B cell (primary cell): ENCODE measurements at regions of chr1 and their contacts with region 1.

Region 1: DNA sequence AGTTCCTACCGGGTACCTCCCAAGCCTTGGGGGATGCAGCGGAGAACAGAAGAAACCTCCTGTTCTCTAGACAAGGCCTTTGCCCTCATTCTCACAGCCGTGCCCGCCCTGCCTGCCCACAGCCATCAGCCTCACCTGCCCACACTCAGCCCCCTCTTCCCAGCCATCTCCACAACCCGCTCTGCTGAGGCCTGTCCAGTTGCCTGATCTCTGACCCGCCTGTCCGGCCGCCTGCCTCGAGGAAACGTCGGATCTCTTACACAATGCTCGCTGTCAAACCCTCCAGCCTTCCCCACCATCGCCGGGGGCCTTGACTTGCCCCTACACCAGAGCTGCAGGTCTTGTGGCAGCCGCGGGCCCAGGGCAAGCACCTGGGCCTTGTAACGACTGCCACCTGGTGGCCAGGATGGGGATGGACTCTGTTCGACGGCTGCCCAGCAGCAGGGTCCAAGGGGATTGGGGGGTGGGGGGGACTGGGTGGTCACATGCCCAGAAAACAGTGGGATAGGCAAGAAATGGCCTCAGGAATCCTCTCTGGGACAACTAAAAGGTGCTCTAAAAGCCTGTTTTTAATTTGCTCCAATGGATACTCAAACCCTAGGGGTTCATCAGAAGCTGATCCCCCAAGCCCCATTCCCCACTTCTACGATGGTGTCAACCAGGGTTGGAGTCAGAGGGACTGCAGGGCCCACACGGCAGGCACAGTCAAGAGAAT is 31.0 kb downstream of the SLC45A1 start:
- DNase-seq: peak; percentile 78
- ATAC-seq: peak; percentile 89
- H3K4me3 ChIP-seq: no peak overlapping the region
- H3K4me3 Mint-ChIP-seq: no peak overlapping the region
- H3K27ac ChIP-seq: no peak overlapping the region
- H3K27ac Mint-ChIP-seq: peak overlapping the region; percentile 61
- H3K4me1 ChIP-seq: peaks cover 3% of the 10 kb centered on the region in 2 donors
- H3K4me1 Mint-ChIP-seq: peaks cover 4% of the 10 kb centered on the region
- H3K27me3 ChIP-seq: peaks cover 0 to 3% (median 0%) of the 10 kb centered on the region in 4 experiments
- H3K27me3 Mint-ChIP-seq: peaks cover 8% of the 10 kb centered on the region
- CTCF ChIP-seq: peak; percentile 85

Region 2: DNA sequence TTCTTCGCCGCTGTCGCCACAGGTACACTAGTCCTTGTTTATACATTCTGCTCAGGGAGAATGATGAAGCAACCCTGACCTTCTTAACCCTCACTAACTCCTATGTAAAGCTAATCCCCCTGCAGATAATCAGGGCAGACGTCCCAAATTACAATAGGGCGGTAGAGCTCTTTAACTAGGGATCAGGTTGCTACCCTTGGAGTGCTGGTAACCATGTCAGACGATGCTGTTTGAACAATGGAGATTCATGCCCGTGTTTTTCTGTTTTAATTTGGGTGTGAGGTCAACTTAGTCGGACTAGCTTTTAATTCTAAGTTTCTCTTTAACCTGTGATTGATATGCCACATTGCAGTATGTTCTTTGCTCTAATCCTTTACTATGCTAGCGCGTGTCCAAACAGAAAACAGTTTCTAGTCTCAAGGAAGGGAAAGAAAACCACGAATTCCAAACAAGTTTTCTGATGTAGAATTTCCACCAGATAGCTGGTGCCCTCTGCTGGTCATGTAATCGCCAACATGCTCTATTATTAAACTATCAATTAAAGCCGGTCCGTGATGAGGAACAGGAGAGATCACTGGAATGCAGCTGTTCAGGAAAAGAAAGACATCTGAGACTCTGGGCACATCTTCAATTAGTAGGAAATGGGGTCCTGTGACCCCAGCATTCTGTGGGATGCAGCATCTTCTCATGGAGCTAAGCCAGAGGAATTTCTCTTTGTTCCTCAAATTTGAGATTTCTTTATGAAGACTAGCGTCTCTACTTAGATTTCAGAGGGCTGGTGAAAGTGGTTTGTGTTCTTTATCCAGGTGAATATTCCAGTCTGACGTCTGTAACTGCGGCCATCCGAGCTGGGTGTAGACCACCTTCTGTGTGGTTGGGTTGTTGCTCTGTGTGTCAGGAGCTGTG is 596.2 kb before region 1 on chr1:
- CTCF ChIA-PET with region 1: no interaction called
- POLR2A ChIA-PET with region 1: no interaction called
- intact Hi-C with region 1: no loop called
- DNase-seq: peak; percentile 70
- ATAC-seq: peak; percentile 41
- H3K4me3 ChIP-seq: no peak overlapping the region
- H3K4me3 Mint-ChIP-seq: peak overlapping the region; percentile 42
- H3K27ac ChIP-seq: no peak overlapping the region
- H3K27ac Mint-ChIP-seq: no peak overlapping the region
- H3K4me1 ChIP-seq: peaks cover 0 to 7% of the 10 kb centered on the region in 2 donors
- H3K4me1 Mint-ChIP-seq: peaks cover 4% of the 10 kb centered on the region
- H3K27me3 ChIP-seq: no peaks in the 10 kb centered on the region
- H3K27me3 Mint-ChIP-seq: no peaks in the 10 kb centered on the region
- CTCF ChIP-seq: peak; percentile 90

Region 3: DNA sequence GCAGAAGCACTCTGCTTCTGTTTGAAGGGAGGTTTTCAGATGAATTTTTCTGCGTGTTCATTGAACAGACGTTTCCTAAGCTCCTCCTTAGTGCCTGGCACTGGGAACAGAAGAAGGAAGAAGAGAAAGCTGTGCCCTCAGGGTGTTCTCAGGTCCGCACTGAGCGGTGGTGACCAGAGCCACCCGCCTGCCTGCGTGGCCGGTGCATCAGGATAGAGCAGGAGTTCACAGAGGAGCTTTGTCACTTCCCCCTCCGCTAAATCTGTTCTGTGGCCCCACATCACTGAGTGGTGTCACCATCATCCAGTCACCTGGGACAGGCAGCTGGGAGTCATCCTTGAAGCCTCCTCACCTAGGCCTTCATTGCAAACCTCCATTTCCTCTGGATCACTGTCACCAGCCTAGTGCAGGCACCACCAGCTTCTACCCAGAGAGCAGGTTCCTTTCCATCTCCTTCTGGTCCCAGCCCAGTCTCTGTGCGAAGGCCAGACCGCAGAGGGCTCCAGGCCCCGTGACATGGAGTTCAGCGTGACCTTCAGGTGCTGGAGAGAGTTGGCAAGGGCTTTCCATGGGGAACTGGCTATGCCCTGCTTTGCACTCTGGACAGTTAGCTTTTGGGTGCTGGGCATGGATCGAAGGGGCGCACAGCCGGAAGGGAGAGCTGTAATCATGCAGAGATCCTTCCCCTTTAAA is 365.7 kb before region 1 on chr1:
- CTCF ChIA-PET with region 1: interaction called, 12 read pairs
- POLR2A ChIA-PET with region 1: no interaction called
- intact Hi-C with region 1: loop called (anchors 1 kb)
- DNase-seq: no peak
- ATAC-seq: no peak
- H3K4me3 ChIP-seq: no peak overlapping the region
- H3K4me3 Mint-ChIP-seq: no peak overlapping the region
- H3K27ac ChIP-seq: no peak overlapping the region
- H3K27ac Mint-ChIP-seq: no peak overlapping the region
- H3K4me1 ChIP-seq: peaks cover 4 to 6% of the 10 kb centered on the region in 2 donors
- H3K4me1 Mint-ChIP-seq: peaks cover 5% of the 10 kb centered on the region
- H3K27me3 ChIP-seq: no peaks in the 10 kb centered on the region
- H3K27me3 Mint-ChIP-seq: no peaks in the 10 kb centered on the region
- CTCF ChIP-seq: no peak

Region 4: GRCh38 chr1:8182034-8182761 is 166.7 kb before region 1 on chr1:
- CTCF ChIA-PET with region 1: no interaction called
- POLR2A ChIA-PET with region 1: no interaction called
- intact Hi-C with region 1: no loop called
- DNase-seq: no peak
- ATAC-seq: no peak
- H3K4me3 ChIP-seq: no peak overlapping the region
- H3K4me3 Mint-ChIP-seq: no peak overlapping the region
- H3K27ac ChIP-seq: no peak overlapping the region
- H3K27ac Mint-ChIP-seq: no peak overlapping the region
- H3K4me1 ChIP-seq: no peaks in the 10 kb centered on the region
- H3K4me1 Mint-ChIP-seq: no peaks in the 10 kb centered on the region
- H3K27me3 ChIP-seq: no peaks in the 10 kb centered on the region
- H3K27me3 Mint-ChIP-seq: peaks cover 7% of the 10 kb centered on the region
- CTCF ChIP-seq: no peak